Calu3 (cell line): ENCODE measurements at regions of chr15 and their contacts with region 1.

Region 1: GRCh38 chr15:62075595-62076282 is 9.0 kb downstream of the C2CD4A start:
- DNase-seq: peak; percentile 80
- H3K4me3 Mint-ChIP-seq: peak overlapping the region; percentile 46
- H3K27ac Mint-ChIP-seq: peak overlapping the region; percentile 68
- H3K4me1 Mint-ChIP-seq: peaks cover 20% of the 10 kb centered on the region
- H3K27me3 Mint-ChIP-seq: no peaks in the 10 kb centered on the region
- CTCF ChIP-seq: no peak

Region 2: GRCh38 chr15:62035256-62035908 is 40.4 kb before region 1 on chr15:
- CTCF ChIA-PET with region 1: no interaction called
- intact Hi-C with region 1: no loop called
- DNase-seq: no peak
- H3K4me3 Mint-ChIP-seq: no peak overlapping the region
- H3K27ac Mint-ChIP-seq: peak overlapping the region; percentile 8
- H3K4me1 Mint-ChIP-seq: peaks cover 18% of the 10 kb centered on the region
- H3K27me3 Mint-ChIP-seq: no peaks in the 10 kb centered on the region
- CTCF ChIP-seq: no peak

Region 3: DNA sequence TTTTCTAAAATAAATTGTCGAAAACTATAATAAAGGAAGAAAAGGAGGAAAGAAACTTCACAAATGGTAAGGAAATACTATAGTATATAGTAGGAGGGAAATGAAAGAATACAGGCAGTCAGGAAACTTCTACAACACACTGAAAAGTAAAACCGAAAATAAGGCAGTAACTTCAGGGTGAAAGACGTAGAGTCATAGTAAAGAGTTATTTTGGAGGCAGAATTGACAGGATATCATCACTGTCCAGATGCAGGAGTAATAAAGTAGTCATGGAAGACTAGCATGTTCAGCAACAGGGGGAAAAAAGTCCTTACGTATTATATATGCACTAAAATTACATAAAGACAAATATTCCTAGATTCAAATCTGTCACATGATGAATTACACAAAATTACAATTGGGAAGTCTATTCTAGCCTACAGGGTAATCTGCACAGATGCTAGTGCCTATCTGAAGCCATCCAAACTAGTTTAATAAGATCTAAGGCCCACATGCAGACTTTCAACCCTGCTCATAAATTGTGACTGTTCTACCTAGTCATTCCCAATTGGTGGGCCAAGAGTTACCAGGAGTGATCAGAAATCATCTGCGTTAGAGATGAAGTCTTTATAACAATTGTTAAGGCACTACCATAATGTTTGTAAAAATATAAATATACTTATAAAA is 29.5 kb before region 1 on chr15:
- CTCF ChIA-PET with region 1: interaction called, 10 read pairs
- intact Hi-C with region 1: no loop called
- DNase-seq: no peak
- H3K4me3 Mint-ChIP-seq: no peak overlapping the region
- H3K27ac Mint-ChIP-seq: no peak overlapping the region
- H3K4me1 Mint-ChIP-seq: peaks cover 17% of the 10 kb centered on the region
- H3K27me3 Mint-ChIP-seq: no peaks in the 10 kb centered on the region
- CTCF ChIP-seq: no peak

Region 4: GRCh38 chr15:62109982-62110851 is 34.5 kb after region 1 on chr15:
- CTCF ChIA-PET with region 1: no interaction called
- intact Hi-C with region 1: loop called (anchors 1 kb)
- DNase-seq: peak; percentile 57
- H3K4me3 Mint-ChIP-seq: no peak overlapping the region
- H3K27ac Mint-ChIP-seq: peak overlapping the region; percentile 74
- H3K4me1 Mint-ChIP-seq: peaks cover 71% of the 10 kb centered on the region
- H3K27me3 Mint-ChIP-seq: no peaks in the 10 kb centered on the region
- CTCF ChIP-seq: no peak